ENCODE measurements at regions of chr1 and their contacts with region 1.

Region 1: GRCh38 chr1:153220606-153221303 is 3.4 kb downstream of the PRR9 start:
- DNase-seq: peak in 25 of 42 donors; percentile 17 to 77 (median 38)

Region 2: GRCh38 chr1:152654110-152654509 is 566.6 kb before region 1 on chr1:
- intact Hi-C with region 1: loop called (anchors 10 kb)
- DNase-seq: peak; percentile 11 to 86 (median 60)

Region 3: DNA sequence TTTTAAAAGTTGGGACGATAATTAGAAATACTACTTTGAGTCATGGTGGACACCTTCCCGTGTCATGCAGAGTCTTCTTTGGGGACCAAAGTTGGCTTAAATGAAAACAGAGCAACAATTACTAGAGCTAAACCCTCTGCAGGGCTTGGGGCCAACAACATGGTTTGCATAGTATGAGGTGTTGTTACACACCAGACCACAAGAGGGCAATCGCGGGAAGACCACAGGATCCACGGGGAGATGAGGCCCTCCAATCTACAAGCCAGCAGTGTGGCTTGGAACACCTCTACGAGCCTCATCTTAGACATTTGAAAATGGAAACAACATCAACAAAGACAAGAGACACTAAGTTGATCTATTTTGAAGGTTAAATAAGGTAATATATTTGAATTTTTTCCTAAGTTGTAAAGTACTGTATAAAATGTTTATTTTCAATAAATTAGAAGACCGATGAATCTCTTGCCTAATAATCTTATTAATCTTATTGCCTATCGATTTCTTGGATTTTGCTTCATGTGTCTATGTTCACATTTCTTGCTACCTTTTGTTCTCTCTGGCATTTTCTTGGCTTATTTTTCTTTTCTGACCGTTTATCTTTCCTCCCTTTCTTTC is 350.8 kb before region 1 on chr1:
- intact Hi-C with region 1: loop called (anchors 10 kb)
- DNase-seq: peak; percentile 37 to 89 (median 70)

Region 4: DNA sequence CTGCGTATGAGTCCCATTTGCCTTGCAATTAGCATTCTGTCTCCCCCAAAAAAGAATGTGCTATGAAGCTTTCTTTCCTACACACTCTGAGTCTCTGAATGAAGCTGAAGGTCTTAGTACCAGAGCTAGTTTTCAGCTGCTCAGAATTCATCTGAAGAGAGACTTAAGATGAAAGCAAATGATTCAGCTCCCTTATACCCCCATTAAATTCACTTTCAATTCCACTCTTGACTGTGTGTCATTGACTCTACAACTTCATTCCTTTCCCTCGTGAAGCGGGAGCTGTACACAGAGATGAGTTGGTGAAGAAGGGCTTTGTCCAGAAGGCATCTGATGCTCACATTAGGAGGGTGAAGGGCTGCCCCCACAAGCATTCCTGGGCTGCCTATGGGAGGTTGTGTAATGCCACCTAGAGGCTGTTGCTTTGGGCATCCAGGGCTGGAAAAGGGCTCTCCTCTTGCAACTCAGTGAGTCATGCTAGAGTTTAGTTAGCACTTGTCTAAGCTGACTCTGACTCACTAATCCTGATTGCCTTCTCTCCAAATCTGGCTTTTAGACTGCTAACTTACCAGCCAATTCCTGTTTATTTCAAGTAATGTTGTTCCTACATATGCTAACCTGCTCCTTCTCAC is 188.0 kb before region 1 on chr1:
- intact Hi-C with region 1: no loop called
- DNase-seq: peak in 33 of 42 donors; percentile 6 to 81 (median 32)

Measured in head of caudate nucleus (tissue), 42 donors.